Endothelial cell of umbilical vein (primary cell): ENCODE measurements at regions of chr3 and their contacts with region 1.

Region 1: GRCh38 chr3:45011756-45012508 is 14.2 kb upstream of the CLEC3B start:
- DNase-seq: peak; percentile 98
- H3K4me3 ChIP-seq: no peak overlapping the region
- H3K27ac ChIP-seq: peak overlapping the region; percentile 98
- H3K4me1 ChIP-seq: peaks cover 23% of the 10 kb centered on the region
- H3K27me3 ChIP-seq: no peaks in the 10 kb centered on the region
- CTCF ChIP-seq: no peak
- POLR2A ChIP-seq: no peak

Region 2: GRCh38 chr3:45001738-45002137 is 10.2 kb before region 1 on chr3:
- CTCF ChIA-PET with region 1: interaction called, 16 read pairs
- POLR2A ChIA-PET with region 1: interaction called, 4 read pairs
- dilution Hi-C with region 1: no loop called
- intact Hi-C with region 1: no loop called
- DNase-seq: no peak
- H3K4me3 ChIP-seq: no peak overlapping the region
- H3K27ac ChIP-seq: peak overlapping the region; percentile 62
- H3K4me1 ChIP-seq: peaks cover 13% of the 10 kb centered on the region
- H3K27me3 ChIP-seq: no peaks in the 10 kb centered on the region
- CTCF ChIP-seq: no peak
- POLR2A ChIP-seq: no peak